Naive thymus-derived CD4-positive, alpha-beta T cell (primary cell): ENCODE measurements at regions of chr15 and their contacts with region 1.

Region 1: GRCh38 chr15:58933281-58934113 is at the start of gene SLTM:
- DNase-seq: peak; percentile 90 to 95 (median 93)
- ATAC-seq: peak; percentile 95
- H3K4me3 ChIP-seq: peak within 1 kb of the TSS; percentile 91
- H3K4me3 Mint-ChIP-seq: peak within 1 kb of the TSS; percentile 91 to 100 (median 98)
- H3K27ac ChIP-seq: peak within 1 kb of the TSS; percentile 93
- H3K27ac Mint-ChIP-seq: peak within 1 kb of the TSS; percentile 98 to 100 (median 99)
- H3K4me1 ChIP-seq: peaks cover 19 to 21% of the 10 kb centered on the region in 2 donors
- H3K4me1 Mint-ChIP-seq: peaks cover 14 to 34% (median 27%) of the 10 kb centered on the region in 7 donors
- H3K27me3 ChIP-seq: no peaks in the 10 kb centered on the region
- H3K27me3 Mint-ChIP-seq: no peaks in the 10 kb centered on the region
- total RNA-seq, gene SLTM: 118 to 166 (median 159) TPM

Region 2: GRCh38 chr15:58628206-58628947 is 305.1 kb before region 1 on chr15:
- CTCF ChIA-PET with region 1: no interaction called
- POLR2A ChIA-PET with region 1: no interaction called
- intact Hi-C with region 1: loop called in 1 of 2 experiments (anchors 10 kb)
- DNase-seq: peak in 6 of 9 donors; percentile 14 to 44 (median 21)
- ATAC-seq: peak; percentile 70
- H3K4me3 ChIP-seq: peak overlapping the region; percentile 67
- H3K4me3 Mint-ChIP-seq: peak overlapping the region; percentile 64 to 92 (median 87)
- H3K27ac ChIP-seq: peak overlapping the region; percentile 86
- H3K27ac Mint-ChIP-seq: peak overlapping the region; percentile 92 to 100 (median 96)
- H3K4me1 ChIP-seq: peaks cover 19% of the 10 kb centered on the region in 2 donors
- H3K4me1 Mint-ChIP-seq: peaks cover 32 to 67% (median 58%) of the 10 kb centered on the region in 7 donors
- H3K27me3 ChIP-seq: no peaks in the 10 kb centered on the region
- H3K27me3 Mint-ChIP-seq: no peaks in the 10 kb centered on the region

Region 3: GRCh38 chr15:58852347-58852746 is 81.2 kb before region 1 on chr15:
- CTCF ChIA-PET with region 1: no interaction called
- POLR2A ChIA-PET with region 1: no interaction called
- intact Hi-C with region 1: no loop called
- DNase-seq: no peak
- ATAC-seq: no peak
- H3K4me3 ChIP-seq: no peak overlapping the region
- H3K4me3 Mint-ChIP-seq: no peak overlapping the region
- H3K27ac ChIP-seq: no peak overlapping the region
- H3K27ac Mint-ChIP-seq: no peak overlapping the region
- H3K4me1 ChIP-seq: no peaks in the 10 kb centered on the region
- H3K4me1 Mint-ChIP-seq: peaks cover 0 to 2% (median 0%) of the 10 kb centered on the region in 7 donors
- H3K27me3 ChIP-seq: no peaks in the 10 kb centered on the region
- H3K27me3 Mint-ChIP-seq: no peaks in the 10 kb centered on the region

Region 4: GRCh38 chr15:58918239-58918638 is 15.3 kb before region 1 on chr15:
- CTCF ChIA-PET with region 1: interaction called, 7 read pairs
- POLR2A ChIA-PET with region 1: interaction called, 13 read pairs
- intact Hi-C with region 1: loop called in 1 of 2 experiments (anchors 2 kb)
- DNase-seq: no peak
- ATAC-seq: no peak
- H3K4me3 ChIP-seq: no peak overlapping the region
- H3K4me3 Mint-ChIP-seq: no peak overlapping the region
- H3K27ac ChIP-seq: no peak overlapping the region
- H3K27ac Mint-ChIP-seq: no peak overlapping the region
- H3K4me1 ChIP-seq: peaks cover 3 to 10% of the 10 kb centered on the region in 2 donors
- H3K4me1 Mint-ChIP-seq: peaks cover 14 to 48% (median 34%) of the 10 kb centered on the region in 7 donors
- H3K27me3 ChIP-seq: no peaks in the 10 kb centered on the region
- H3K27me3 Mint-ChIP-seq: no peaks in the 10 kb centered on the region

Region 5: GRCh38 chr15:58987489-58988005 is 54.0 kb after region 1 on chr15 and contains the start of gene RNF111:
- CTCF ChIA-PET with region 1: no interaction called
- POLR2A ChIA-PET with region 1: interaction called, 3 read pairs
- intact Hi-C with region 1: loop called (anchors 1 kb)
- DNase-seq: peak; percentile 66 to 94 (median 90)
- ATAC-seq: peak; percentile 98
- H3K4me3 ChIP-seq: peak within 1 kb of the TSS; percentile 83
- H3K4me3 Mint-ChIP-seq: peak within 1 kb of the TSS; percentile 89 to 100 (median 96)
- H3K27ac ChIP-seq: peak within 1 kb of the TSS; percentile 91
- H3K27ac Mint-ChIP-seq: peak within 1 kb of the TSS; percentile 87 to 96 (median 94)
- H3K4me1 ChIP-seq: peaks cover 17 to 25% of the 10 kb centered on the region in 2 donors
- H3K4me1 Mint-ChIP-seq: peaks cover 33 to 56% (median 53%) of the 10 kb centered on the region in 7 donors
- H3K27me3 ChIP-seq: no peaks in the 10 kb centered on the region
- H3K27me3 Mint-ChIP-seq: peaks cover 0 to 13% (median 0%) of the 10 kb centered on the region in 5 donors
- total RNA-seq, gene RNF111: 50.8 to 61.1 (median 57.9) TPM

Region 6: GRCh38 chr15:59522988-59523461 is 589.5 kb after region 1 on chr15:
- CTCF ChIA-PET with region 1: no interaction called
- POLR2A ChIA-PET with region 1: no interaction called
- intact Hi-C with region 1: loop called in 1 of 2 experiments (anchors 1 kb)
- DNase-seq: peak in 8 of 9 donors; percentile 41 to 81 (median 74)
- ATAC-seq: peak; percentile 92
- H3K4me3 ChIP-seq: no peak overlapping the region
- H3K4me3 Mint-ChIP-seq: peak overlapping the region; percentile 26 to 82 (median 74)
- H3K27ac ChIP-seq: no peak overlapping the region
- H3K27ac Mint-ChIP-seq: peak overlapping the region; percentile 13 to 90 (median 81)
- H3K4me1 ChIP-seq: peaks cover 12 to 26% of the 10 kb centered on the region in 2 donors
- H3K4me1 Mint-ChIP-seq: peaks cover 15 to 58% (median 40%) of the 10 kb centered on the region in 7 donors
- H3K27me3 ChIP-seq: no peaks in the 10 kb centered on the region
- H3K27me3 Mint-ChIP-seq: peaks cover 0 to 26% (median 0%) of the 10 kb centered on the region in 5 donors

Region 7: DNA sequence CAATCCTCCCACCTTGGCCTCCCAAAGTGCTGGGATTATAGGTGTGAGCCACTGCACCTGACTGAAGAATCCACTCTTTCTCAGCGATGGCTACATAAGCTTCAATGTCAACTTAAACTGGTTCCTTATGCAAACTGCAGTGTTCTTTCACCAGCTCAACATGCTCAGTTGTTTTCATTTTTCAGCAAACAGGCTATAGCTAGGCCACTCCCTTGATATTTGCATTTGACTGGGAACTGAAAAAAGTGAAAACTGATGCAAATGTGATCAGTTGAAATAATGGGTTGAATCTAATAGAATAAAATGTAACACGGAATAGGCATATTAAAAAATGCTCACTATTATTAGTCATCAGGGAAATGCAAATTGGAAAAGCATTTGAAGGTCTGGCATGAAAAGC is 603.9 kb after region 1 on chr15:
- CTCF ChIA-PET with region 1: no interaction called
- POLR2A ChIA-PET with region 1: no interaction called
- intact Hi-C with region 1: no loop called
- DNase-seq: no peak
- ATAC-seq: no peak
- H3K4me3 ChIP-seq: no peak overlapping the region
- H3K4me3 Mint-ChIP-seq: no peak overlapping the region
- H3K27ac ChIP-seq: no peak overlapping the region
- H3K27ac Mint-ChIP-seq: no peak overlapping the region
- H3K4me1 ChIP-seq: no peaks in the 10 kb centered on the region
- H3K4me1 Mint-ChIP-seq: peaks cover 0 to 6% (median 5%) of the 10 kb centered on the region in 7 donors
- H3K27me3 ChIP-seq: no peaks in the 10 kb centered on the region
- H3K27me3 Mint-ChIP-seq: peaks cover 0 to 10% (median 0%) of the 10 kb centered on the region in 5 donors